ENCODE measurements at regions of chr21 and their contacts with region 1.

Region 1: GRCh38 chr21:41369105-41369919 is 7.5 kb downstream of the MX2 start:
- DNase-seq: peak; percentile 76
- ATAC-seq: peak; percentile 42
- H3K4me3 ChIP-seq: peak overlapping the region; percentile 36 to 81 (median 52)
- H3K4me3 Mint-ChIP-seq: peak overlapping the region; percentile 74
- H3K27ac ChIP-seq: peak overlapping the region; percentile 69 to 88
- H3K27ac Mint-ChIP-seq: peak overlapping the region; percentile 87
- H3K4me1 ChIP-seq: peaks cover 62 to 70% of the 10 kb centered on the region in 2 donors
- H3K4me1 Mint-ChIP-seq: peaks cover 74% of the 10 kb centered on the region
- H3K27me3 ChIP-seq: no peaks in the 10 kb centered on the region
- H3K27me3 Mint-ChIP-seq: no peaks in the 10 kb centered on the region
- CTCF ChIP-seq: no peak

Region 2: DNA sequence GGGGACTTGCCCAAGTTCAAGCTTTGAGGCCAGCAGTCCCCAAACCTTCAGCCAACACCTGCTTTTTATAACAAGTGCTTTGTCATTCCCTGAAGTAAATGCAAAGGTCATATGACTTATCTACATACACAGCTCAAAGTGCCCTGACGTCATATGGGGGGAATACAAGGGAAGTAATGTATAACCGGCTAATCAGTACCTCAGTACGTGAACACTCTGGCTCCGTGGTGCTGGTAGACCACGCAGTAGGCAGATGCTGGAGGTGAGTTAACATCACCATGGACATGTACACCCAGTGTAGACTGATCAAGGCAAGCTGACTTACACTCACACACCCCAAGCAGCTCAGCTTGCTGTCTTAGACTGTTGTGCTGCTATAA is 141.3 kb before region 1 on chr21:
- CTCF ChIA-PET with region 1: no interaction called
- POLR2A ChIA-PET with region 1: no interaction called
- intact Hi-C with region 1: loop called (anchors 2 kb)
- DNase-seq: peak; percentile 24
- ATAC-seq: no peak
- H3K4me3 ChIP-seq: no peak overlapping the region
- H3K4me3 Mint-ChIP-seq: peak overlapping the region; percentile 84
- H3K27ac ChIP-seq: peak overlapping the region; percentile 87 to 89
- H3K27ac Mint-ChIP-seq: peak overlapping the region; percentile 87
- H3K4me1 ChIP-seq: peaks cover 43 to 54% of the 10 kb centered on the region in 2 donors
- H3K4me1 Mint-ChIP-seq: peaks cover 61% of the 10 kb centered on the region
- H3K27me3 ChIP-seq: no peaks in the 10 kb centered on the region
- H3K27me3 Mint-ChIP-seq: no peaks in the 10 kb centered on the region
- CTCF ChIP-seq: no peak

Region 3: GRCh38 chr21:41425954-41426675 is 56.8 kb after region 1 on chr21 and contains the start of gene MX1:
- CTCF ChIA-PET with region 1: interaction called, 15 read pairs
- POLR2A ChIA-PET with region 1: interaction called, 17 read pairs
- intact Hi-C with region 1: loop called (anchors 2 kb)
- DNase-seq: peak; percentile 82
- ATAC-seq: peak; percentile 95
- H3K4me3 ChIP-seq: peak within 1 kb of the TSS; percentile 57 to 93 (median 74)
- H3K4me3 Mint-ChIP-seq: peak within 1 kb of the TSS; percentile 99
- H3K27ac ChIP-seq: peak within 1 kb of the TSS; percentile 69 to 83
- H3K27ac Mint-ChIP-seq: peak within 1 kb of the TSS; percentile 98
- H3K4me1 ChIP-seq: peaks cover 55 to 71% of the 10 kb centered on the region in 2 donors
- H3K4me1 Mint-ChIP-seq: peaks cover 75% of the 10 kb centered on the region
- H3K27me3 ChIP-seq: no peaks in the 10 kb centered on the region
- H3K27me3 Mint-ChIP-seq: no peaks in the 10 kb centered on the region
- CTCF ChIP-seq: no peak
- total RNA-seq, gene MX1: 61.8 and 62.9 TPM in 2 replicates

Region 4: GRCh38 chr21:41460578-41461527 is 91.5 kb after region 1 on chr21:
- CTCF ChIA-PET with region 1: interaction called, 10 read pairs
- POLR2A ChIA-PET with region 1: no interaction called
- intact Hi-C with region 1: loop called (anchors 1 kb)
- DNase-seq: peak; percentile 69
- ATAC-seq: peak; percentile 75
- H3K4me3 ChIP-seq: no peak overlapping the region
- H3K4me3 Mint-ChIP-seq: no peak overlapping the region
- H3K27ac ChIP-seq: no peak overlapping the region
- H3K27ac Mint-ChIP-seq: no peak overlapping the region
- H3K4me1 ChIP-seq: peaks cover 11 to 15% of the 10 kb centered on the region in 2 donors
- H3K4me1 Mint-ChIP-seq: peaks cover 22% of the 10 kb centered on the region
- H3K27me3 ChIP-seq: no peaks in the 10 kb centered on the region
- H3K27me3 Mint-ChIP-seq: no peaks in the 10 kb centered on the region
- CTCF ChIP-seq: peak; percentile 75

Measured in B cell (primary cell).